HEK293T (cell line): ENCODE measurements at regions of chr12 and their contacts with region 1.

Region 1: DNA sequence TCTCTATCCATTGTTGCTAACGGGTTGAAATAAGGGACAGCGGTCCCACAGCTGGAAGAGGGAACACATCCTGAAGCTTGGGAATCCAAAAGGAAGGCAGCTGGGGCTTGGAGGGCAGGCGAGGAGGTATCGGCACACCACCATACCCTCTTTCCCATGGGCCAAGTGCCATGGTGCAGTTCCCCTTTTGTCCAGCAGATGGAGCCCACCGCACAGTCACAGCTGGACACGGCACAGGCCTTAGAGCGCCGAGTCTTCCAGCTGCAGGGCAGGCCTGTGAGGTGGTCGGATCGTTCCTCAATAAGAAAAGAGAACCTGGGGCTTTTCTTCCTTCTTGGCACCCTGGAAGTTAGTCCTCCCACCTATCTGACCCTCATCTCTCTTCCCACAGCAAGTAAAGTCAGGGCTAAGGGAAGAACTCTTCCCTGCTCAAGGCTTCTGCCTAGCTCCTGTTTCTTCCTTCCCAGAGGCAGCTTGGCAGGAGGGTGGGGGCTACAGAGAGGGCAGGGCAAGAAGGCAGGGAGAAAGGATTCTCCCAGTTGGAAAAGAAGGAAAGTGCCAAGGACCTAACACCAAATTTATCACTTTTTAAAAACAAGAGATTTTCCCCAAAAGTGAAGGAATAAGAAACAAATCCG is 8.6 kb downstream of the PPP1R1A start:
- DNase-seq: peak; percentile 88

Region 2: GRCh38 chr12:54479421-54479820 is 100.4 kb before region 1 on chr12:
- CTCF ChIA-PET with region 1: no interaction called
- POLR2A ChIA-PET with region 1: no interaction called
- DNase-seq: no peak

Region 3: DNA sequence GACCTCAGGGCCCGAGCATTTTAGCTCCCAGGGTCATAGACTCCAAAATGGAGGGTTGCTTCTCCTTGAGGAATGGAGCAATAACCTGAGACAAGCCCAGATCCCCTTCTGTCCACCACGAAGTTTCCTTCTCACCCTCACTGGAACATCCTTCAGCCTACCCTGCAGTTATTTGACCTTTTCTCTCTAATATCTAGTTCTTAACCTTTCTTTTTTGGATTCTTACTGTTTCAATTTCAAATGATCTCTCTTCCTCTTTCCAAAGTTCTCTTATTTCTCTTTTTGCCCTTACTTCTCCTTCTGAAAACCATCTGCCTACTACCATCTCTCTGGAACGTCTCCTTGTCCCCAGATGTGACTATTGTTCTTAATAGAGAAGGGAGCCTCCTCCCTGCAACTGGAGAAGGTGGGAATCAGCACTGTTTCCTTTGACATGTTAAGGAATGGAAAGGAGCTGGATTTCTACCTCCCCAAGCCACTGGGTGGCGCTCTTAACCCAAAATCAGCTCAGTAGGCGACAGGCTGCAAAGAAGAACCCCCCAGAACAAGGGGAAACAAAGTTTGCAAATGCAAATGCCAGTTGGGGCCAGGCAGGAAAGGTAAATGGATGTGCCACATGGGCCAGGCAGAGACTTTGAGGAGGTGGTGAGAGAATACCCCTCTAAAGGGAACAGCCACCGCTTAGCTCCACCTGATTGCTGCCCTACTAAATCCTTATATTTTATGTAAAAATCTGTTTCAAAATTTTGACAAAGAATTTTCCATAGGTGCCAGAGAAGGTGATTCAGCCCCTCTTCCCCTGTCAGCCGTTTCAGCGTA is 52.8 kb before region 1 on chr12:
- CTCF ChIA-PET with region 1: interaction called, 21 read pairs
- POLR2A ChIA-PET with region 1: no interaction called
- DNase-seq: peak; percentile 69

Region 4: GRCh38 chr12:54622459-54623183 is 42.8 kb after region 1 on chr12:
- CTCF ChIA-PET with region 1: no interaction called
- POLR2A ChIA-PET with region 1: no interaction called
- DNase-seq: no peak